ENCODE measurements at regions of chr13 and their contacts with region 1.

Region 1: DNA sequence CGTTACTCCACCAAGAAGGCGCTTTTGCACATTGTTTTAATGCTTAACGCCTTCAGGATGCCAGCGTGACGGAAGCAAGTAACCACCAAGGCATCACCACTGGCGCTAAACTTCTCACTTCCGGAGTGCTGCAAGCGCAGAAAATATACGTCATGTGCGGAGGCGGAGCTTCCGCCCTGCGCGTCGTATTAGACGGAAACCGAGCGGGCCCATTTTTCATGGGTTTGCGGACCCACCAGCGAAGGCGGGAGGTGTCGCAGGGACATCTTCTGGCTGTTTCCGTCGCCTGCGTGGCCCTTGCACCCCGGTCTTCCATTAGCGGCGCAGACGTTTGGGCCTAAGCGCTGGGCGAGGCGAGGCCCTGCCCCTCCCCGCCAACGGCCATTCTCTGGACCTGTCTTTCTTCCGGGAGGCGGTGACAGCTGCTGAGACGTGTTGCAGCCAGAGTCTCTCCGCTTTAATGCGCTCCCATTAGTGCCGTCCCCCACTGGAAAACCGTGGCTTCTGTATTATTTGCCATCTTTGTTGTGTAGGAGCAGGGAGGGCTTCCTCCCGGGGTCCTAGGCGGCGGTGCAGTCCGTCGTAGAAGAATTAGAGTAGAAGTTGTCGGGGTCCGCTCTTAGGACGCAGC is at the start of gene ERCC5:
- DNase-seq: peak; percentile 93
- ATAC-seq: peak; percentile 81
- H3K4me3 ChIP-seq: peak within 1 kb of the TSS; percentile 95
- H3K27ac ChIP-seq: peak within 1 kb of the TSS; percentile 74
- H3K4me1 ChIP-seq: 0 out of 2 replicates have a peak, but pooled peaks cover 6% of the 10 kb centered on the region
- H3K27me3 ChIP-seq: no peaks in the 10 kb centered on the region
- CTCF ChIP-seq: no peak
- total RNA-seq, gene ERCC5: 19.3 and 23.7 TPM in 2 replicates

Region 2: GRCh38 chr13:102580552-102581169 is 265.1 kb before region 1 on chr13:
- CTCF ChIA-PET with region 1: no interaction called
- POLR2A ChIA-PET with region 1: no interaction called
- intact Hi-C with region 1: loop called (anchors 1 kb)
- DNase-seq: peak; percentile 78
- ATAC-seq: peak; percentile 76
- H3K4me3 ChIP-seq: no peak overlapping the region
- H3K27ac ChIP-seq: no peak overlapping the region
- H3K4me1 ChIP-seq: no peaks in the 10 kb centered on the region
- H3K27me3 ChIP-seq: peaks cover 18% of the 10 kb centered on the region
- CTCF ChIP-seq: peak; percentile 69

Region 3: DNA sequence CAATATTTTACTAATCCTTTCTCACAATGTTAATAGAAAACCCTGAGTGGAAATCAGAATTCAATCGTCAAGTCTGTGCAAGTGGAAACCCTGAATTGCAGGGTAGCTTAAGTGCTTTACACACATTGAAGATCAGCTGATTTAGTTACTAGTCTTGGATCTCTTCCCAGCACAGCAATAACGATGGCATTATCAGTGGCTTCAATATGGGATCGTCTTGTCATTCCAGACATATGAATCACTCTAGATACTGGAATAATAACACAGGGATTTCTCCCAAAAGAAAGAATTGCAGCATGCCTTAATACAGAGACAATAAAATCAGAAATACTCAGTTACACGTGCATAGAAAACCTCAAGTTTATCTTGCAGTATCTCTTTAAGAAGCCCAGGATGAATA is 138.3 kb before region 1 on chr13:
- CTCF ChIA-PET with region 1: no interaction called
- POLR2A ChIA-PET with region 1: no interaction called
- intact Hi-C with region 1: loop called (anchors 1 kb)
- DNase-seq: peak; percentile 84
- ATAC-seq: peak; percentile 76
- H3K4me3 ChIP-seq: no peak overlapping the region
- H3K27ac ChIP-seq: no peak overlapping the region
- H3K4me1 ChIP-seq: peaks cover 44% of the 10 kb centered on the region
- H3K27me3 ChIP-seq: no peaks in the 10 kb centered on the region
- CTCF ChIP-seq: no peak

Region 4: DNA sequence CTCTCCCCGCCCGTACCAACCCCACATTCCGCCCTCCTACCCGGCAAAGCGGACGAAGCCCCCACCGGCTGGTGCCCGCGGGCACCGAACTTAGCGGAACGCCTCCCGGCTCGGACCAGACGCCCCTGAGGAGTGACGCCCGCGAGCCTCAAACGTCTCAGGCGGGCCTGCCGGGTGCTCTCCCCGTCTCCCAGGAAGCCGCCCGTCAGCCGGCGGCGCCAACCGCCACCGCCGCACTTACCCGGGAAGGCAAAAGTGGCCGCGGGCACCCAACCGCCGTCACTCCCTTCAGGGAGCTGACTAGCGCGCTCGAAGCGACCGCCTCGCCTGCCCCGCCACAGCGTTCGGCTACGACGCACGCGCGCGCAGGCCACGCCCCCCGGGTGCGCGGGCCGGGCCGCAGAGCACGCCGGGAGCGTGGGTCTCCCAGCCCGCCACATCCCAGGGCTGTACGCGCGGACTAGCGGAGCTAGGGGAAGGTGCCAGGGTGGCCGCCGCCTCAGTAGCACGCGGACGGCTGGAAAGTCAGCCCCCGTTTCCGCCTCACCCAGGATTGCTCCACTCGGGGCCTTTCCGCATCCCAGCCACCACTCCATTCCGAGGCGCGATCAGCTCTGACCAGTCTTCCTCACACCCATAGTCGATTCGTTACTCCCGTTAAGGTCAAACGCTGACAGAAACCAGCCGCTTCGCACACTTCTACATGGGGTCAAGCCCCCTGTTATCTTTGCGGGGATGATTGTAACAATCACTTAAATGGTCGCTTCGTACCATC is 72.1 kb before region 1 on chr13 and contains the start of gene TEX30:
- CTCF ChIA-PET with region 1: no interaction called
- POLR2A ChIA-PET with region 1: no interaction called
- intact Hi-C with region 1: loop called (anchors 1 kb)
- DNase-seq: peak; percentile 84
- ATAC-seq: peak; percentile 96
- H3K4me3 ChIP-seq: peak within 1 kb of the TSS; percentile 92
- H3K27ac ChIP-seq: no peak within 1 kb of the TSS
- H3K4me1 ChIP-seq: peaks cover 17% of the 10 kb centered on the region
- H3K27me3 ChIP-seq: no peaks in the 10 kb centered on the region
- CTCF ChIP-seq: no peak
- total RNA-seq, gene TEX30: 15.3 and 16.7 TPM in 2 replicates

Region 5: GRCh38 chr13:102856557-102856956 is 10.8 kb after region 1 on chr13:
- CTCF ChIA-PET with region 1: no interaction called
- POLR2A ChIA-PET with region 1: no interaction called
- intact Hi-C with region 1: loop called (anchors 1 kb)
- DNase-seq: no peak
- ATAC-seq: no peak
- H3K4me3 ChIP-seq: no peak overlapping the region
- H3K27ac ChIP-seq: no peak overlapping the region
- H3K4me1 ChIP-seq: no peaks in the 10 kb centered on the region
- H3K27me3 ChIP-seq: no peaks in the 10 kb centered on the region
- CTCF ChIP-seq: no peak

Region 6: DNA sequence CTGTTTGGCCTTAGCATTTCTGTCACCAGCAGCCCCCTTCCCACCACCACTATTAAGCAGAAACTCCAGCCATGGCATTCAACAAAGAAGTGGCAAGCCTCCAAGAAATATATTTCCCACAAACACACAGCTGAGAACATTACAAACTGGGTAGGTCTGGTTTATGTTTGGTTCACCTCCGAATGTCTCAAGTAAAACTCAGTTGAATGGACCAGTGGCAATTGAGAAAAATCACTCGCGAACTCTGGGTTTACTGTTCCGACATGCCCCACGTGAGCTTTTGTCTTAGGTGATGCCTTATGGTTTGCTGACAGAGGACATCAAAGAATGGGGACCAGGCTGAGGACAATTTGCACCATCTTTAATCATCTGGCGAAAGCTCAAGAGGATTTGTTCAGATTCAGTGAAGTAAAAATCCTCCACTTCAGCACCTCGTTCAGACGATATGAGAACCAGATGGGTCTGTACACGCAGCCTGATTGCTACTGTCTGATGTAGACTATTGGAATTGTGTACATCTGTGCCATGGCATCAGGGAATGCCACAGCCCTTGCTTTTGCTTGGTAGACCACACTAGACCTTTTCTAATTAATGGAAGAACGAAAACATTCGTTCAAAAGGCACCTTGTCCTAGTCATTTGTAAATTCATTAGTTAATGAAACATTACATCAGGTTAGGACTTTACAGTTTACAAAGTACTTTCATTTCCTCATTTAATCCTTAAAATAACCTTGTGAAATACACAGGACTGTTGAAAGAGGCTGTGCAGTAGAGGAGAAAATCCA is 161.1 kb after region 1 on chr13:
- CTCF ChIA-PET with region 1: no interaction called
- POLR2A ChIA-PET with region 1: no interaction called
- intact Hi-C with region 1: no loop called
- DNase-seq: no peak
- ATAC-seq: no peak
- H3K4me3 ChIP-seq: no peak overlapping the region
- H3K27ac ChIP-seq: no peak overlapping the region
- H3K4me1 ChIP-seq: no peaks in the 10 kb centered on the region
- H3K27me3 ChIP-seq: peaks cover 10% of the 10 kb centered on the region
- CTCF ChIP-seq: no peak

Measured in PC-3 (cell line).